ENCODE measurements at regions of chr2 and their contacts with region 1.

Region 1: DNA sequence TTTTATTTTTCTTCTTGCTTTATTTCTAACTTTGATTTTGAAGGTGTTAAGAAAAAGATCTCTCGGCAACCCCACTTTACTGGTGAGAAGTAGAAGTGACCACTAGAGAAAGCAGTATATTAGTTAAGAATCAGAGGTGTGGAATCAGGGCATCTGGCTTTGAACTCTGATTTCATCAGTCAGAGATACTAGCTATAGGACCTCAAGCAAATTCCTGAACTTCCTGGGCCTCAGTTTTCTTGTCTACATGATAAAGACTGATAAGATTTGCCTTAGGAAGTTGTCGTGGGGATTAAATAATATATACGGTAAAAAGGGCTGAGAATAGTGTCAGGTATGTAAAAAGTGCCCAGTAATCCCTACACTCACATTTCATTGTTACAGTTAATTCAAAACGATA is 440.3 kb upstream of the CRIM1 start:
- DNase-seq: no peak
- H3K4me3 ChIP-seq: no peak overlapping the region
- H3K27ac ChIP-seq: no peak overlapping the region
- H3K4me1 ChIP-seq: no peaks in the 10 kb centered on the region
- H3K27me3 ChIP-seq: no peaks in the 10 kb centered on the region
- CTCF ChIP-seq: no peak
- EP300 ChIP-seq: no peak
- POLR2A ChIP-seq: no peak

Region 2: DNA sequence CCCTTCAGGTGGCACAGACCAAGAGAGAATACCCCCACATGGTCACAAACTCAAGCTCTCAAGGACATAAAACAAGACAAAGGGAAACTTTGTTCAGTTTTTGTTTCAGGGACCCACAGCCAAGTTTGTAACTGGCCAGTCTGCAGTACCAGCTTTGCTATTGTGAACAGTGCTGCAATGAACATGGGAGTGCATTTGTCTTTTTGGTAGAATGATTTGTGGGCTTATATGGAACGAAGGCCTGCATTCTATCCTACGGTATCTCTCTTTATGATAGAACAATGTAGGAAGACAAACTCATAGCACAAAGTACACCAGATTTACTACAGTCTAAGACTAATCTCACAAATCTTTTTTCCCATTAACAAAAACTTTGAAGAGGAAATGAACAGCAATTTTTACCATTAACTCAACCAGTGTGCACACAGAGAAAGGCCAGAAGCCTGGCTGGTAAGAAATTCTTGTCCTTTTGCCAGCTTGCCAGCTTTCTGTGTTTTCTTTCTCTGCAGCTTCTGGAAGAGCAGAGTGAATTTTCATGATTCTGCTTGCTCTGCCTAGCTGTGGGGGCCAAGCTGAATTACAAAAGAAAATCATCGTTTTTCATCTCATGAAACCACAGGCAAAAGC is 719.8 kb after region 1 on chr2:
- intact Hi-C with region 1: loop called in 1 of 4 experiments (anchors 5 kb)
- DNase-seq: no peak
- H3K4me3 ChIP-seq: no peak overlapping the region
- H3K27ac ChIP-seq: no peak overlapping the region
- H3K4me1 ChIP-seq: no peaks in the 10 kb centered on the region
- H3K27me3 ChIP-seq: no peaks in the 10 kb centered on the region
- CTCF ChIP-seq: no peak
- EP300 ChIP-seq: no peak
- POLR2A ChIP-seq: no peak

Region 3: GRCh38 chr2:36731941-36732648 is 816.8 kb after region 1 on chr2:
- intact Hi-C with region 1: no loop called
- DNase-seq: no peak
- H3K4me3 ChIP-seq: no peak overlapping the region
- H3K27ac ChIP-seq: no peak overlapping the region
- H3K4me1 ChIP-seq: no peaks in the 10 kb centered on the region
- H3K27me3 ChIP-seq: no peaks in the 10 kb centered on the region
- CTCF ChIP-seq: no peak
- EP300 ChIP-seq: no peak
- POLR2A ChIP-seq: no peak